H1 (cell line): ENCODE measurements at regions of chr1 and their contacts with region 1.

Region 1: DNA sequence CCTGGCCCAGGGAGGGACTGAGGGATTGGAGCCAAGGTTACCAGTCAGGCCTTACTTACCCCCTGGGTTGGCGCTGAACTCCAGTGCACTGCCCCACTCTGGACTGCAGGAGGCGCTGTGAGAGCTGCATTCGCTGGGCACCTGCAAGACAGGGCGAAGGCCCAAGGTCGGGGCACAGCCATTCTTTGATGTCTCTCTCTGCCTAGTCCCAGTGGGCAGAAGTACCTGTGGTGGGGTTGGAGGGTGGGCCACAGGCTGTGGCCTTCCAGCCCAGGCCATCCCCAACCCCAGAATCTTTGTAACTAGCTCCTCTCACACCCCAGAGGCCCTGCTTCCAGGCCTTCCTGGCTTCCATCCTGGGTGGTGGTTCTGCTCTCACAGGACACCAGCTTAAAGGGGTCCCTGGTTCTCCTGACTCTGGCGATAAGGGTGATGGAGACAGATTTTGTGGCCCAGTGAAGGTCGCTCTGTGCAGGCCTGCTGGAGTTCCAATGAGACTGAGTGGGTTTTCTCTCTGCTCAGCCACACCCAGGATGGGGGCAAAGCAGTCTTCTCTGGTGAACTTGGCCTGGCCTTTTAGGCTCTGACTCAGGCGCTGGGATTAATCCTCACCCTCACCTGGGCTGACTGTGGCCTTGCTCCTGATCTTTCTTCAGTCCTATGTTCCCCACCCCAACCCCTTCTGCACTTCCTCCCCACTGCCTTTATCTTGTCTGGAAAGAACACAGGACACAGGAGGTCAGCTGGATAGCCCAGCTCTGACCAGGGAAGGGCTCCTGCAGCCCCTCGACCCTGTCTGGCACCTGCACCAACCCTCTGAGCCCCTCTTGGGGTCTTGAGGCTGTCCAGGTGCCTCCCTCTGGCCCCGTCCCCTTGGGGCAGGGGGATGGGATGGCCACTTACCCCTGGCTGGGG is 967 bp downstream of the MYOG start:
- DNase-seq: peak; percentile 47 to 92
- H3K4me3 ChIP-seq: no peak overlapping the region
- H3K27ac ChIP-seq: no peak overlapping the region
- H3K4me1 ChIP-seq: peaks cover 9 to 14% (median 11%) of the 10 kb centered on the region in 4 experiments
- H3K27me3 ChIP-seq: 0 out of 7 replicates have a peak, but pooled peaks cover 0 to 2% (median 0%) of the 10 kb centered on the region in 4 experiments
- CTCF ChIP-seq: peak; percentile 90 to 96 (median 96)
- EP300 ChIP-seq: no peak
- POLR2A ChIP-seq: no peak
- RAD21 ChIP-seq: peak; percentile 68 to 77

Region 2: GRCh38 chr1:202788800-202789199 is 296.0 kb before region 1 on chr1:
- CTCF ChIA-PET with region 1: no interaction called
- POLR2A ChIA-PET with region 1: no interaction called
- DNase-seq: no peak
- H3K4me3 ChIP-seq: no peak overlapping the region
- H3K27ac ChIP-seq: no peak overlapping the region
- H3K4me1 ChIP-seq: no peaks in the 10 kb centered on the region
- H3K27me3 ChIP-seq: no peaks in the 10 kb centered on the region
- CTCF ChIP-seq: no peak
- EP300 ChIP-seq: no peak
- POLR2A ChIP-seq: no peak
- RAD21 ChIP-seq: no peak

Region 3: DNA sequence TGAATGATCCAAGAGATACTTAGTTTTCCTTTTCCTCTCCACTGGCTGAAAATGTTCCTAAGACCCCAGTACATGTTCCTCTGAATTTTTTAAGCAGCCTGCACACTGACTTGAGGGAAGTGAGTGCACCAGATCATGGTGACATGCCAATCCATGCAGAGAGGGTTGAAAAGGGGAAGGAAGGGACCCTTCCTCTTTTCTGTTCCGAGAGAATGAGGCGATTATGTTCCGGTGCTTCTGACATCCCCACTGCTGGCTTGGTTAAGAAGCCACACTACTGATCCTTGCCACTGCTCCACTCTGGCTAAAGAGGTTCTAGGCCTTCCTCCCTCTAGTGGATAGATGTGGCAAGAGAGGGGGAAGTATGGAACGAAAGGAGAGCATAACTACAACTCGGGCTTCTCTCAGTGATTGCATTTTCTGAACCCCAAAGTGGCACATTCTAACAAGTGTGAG is 116.0 kb before region 1 on chr1:
- CTCF ChIA-PET with region 1: no interaction called
- POLR2A ChIA-PET with region 1: no interaction called
- DNase-seq: peak in 1 of 2 experiments; percentile 49
- H3K4me3 ChIP-seq: no peak overlapping the region
- H3K27ac ChIP-seq: no peak overlapping the region
- H3K4me1 ChIP-seq: peaks cover 4 to 6% (median 5%) of the 10 kb centered on the region in 4 experiments; a peak in 6 of 7 replicates
- H3K27me3 ChIP-seq: no peaks in the 10 kb centered on the region; a peak in 2 of 7 replicates
- CTCF ChIP-seq: peak in 2 of 3 experiments; percentile 87 to 88; a peak in 3 of 4 replicates
- EP300 ChIP-seq: no peak
- POLR2A ChIP-seq: no peak
- RAD21 ChIP-seq: peak; percentile 47 to 52

Region 4: DNA sequence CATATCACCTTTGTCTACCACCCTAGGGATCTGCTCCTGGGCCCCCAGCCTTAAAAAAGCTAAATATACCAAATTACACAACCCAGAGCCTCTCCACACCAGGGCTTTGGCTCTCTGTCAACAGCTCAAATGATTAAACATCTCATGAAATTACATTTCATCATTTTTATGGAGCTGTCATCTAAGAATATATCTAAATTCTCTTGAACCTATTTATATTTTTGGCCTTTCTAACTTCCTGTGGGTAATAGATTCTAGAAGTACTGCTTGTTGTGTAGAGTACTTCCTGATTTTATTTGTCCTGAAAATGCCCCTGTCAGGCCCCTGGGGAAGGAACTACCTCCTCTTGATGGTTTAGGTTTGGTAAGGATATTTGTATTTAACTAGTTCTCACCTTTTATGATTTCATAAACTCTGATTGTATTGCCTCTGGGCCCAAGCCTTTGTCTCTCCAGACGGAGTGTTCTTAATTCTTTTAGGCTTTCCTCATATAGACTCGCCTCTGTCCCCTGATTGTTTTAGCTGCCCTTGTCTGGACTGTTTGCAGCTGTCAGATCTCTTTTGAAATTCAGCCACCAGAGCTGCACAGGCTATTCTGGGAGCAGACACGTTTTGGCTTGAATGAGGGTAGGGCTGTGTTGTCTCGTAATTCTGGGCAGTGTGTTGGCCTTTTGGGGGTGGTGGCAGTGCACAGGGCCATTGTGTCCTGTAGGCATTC is 15.7 kb before region 1 on chr1:
- CTCF ChIA-PET with region 1: interaction called, 143 read pairs
- POLR2A ChIA-PET with region 1: interaction called, 3 read pairs
- DNase-seq: no peak
- H3K4me3 ChIP-seq: no peak overlapping the region
- H3K27ac ChIP-seq: no peak overlapping the region
- H3K4me1 ChIP-seq: no peaks in the 10 kb centered on the region
- H3K27me3 ChIP-seq: peaks cover 0 to 2% (median 0%) of the 10 kb centered on the region in 4 experiments; a peak in 4 of 7 replicates
- CTCF ChIP-seq: no peak
- EP300 ChIP-seq: no peak
- POLR2A ChIP-seq: no peak
- RAD21 ChIP-seq: no peak

Region 5: DNA sequence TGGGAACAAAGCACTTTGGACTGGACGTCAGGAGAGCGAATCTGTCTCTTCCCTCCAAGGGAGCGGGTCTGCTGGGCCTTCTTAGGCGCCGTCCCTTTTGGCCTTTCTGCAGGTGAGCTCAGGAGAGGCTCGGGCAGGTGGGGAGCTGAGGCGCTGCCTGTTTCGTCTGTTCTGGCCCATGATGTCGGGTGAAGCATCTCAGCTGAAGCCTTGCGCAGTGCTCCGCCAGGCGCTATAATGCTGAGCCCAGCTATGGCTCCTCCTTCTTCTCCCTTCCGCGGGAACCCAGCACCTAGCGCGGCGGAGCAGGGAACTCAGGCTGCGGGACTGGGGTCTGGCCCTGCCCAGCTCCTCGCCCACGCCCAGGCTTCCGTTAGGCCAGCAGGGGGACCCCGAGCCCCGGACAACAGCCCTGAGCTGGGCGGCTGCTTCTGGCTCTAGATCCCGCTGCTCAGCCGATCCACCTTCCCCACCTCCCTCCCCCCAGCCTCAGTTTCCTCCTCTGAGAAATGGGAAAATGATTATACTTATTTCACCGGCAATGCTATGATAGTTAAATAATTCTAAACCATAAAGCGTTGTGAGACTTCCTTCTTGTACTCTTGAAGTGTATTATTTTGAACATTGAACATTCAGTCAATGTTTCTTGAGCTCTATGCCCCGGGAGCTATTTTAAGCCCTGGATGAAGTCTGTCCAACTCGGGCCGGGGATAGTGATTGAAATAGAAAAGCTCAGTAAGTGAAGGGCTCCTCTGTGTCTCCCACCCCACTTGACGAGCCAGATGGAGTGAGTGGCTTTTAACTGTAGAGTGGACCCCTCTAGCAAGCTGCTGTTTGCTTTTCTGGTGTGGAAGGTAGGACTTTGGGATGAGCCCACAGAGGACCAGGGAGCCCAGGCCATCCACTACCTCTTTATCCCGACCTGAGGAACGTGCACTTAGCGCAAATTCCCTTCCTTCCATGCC is 33.0 kb after region 1 on chr1:
- CTCF ChIA-PET with region 1: interaction called, 275 read pairs
- POLR2A ChIA-PET with region 1: interaction called, 4 read pairs
- DNase-seq: peak; percentile 76 to 93
- H3K4me3 ChIP-seq: peak overlapping the region in 3 of 4 experiments; percentile 25 to 43 (median 32); a peak in 4 of 8 replicates
- H3K27ac ChIP-seq: no peak overlapping the region
- H3K4me1 ChIP-seq: peaks cover 0 to 2% (median under 1%) of the 10 kb centered on the region in 4 experiments; a peak in 1 of 7 replicates
- H3K27me3 ChIP-seq: peaks cover 0 to 6% (median 3%) of the 10 kb centered on the region in 4 experiments; a peak in 4 of 7 replicates
- CTCF ChIP-seq: peak; percentile 83 to 97 (median 92)
- EP300 ChIP-seq: peak in 1 of 2 experiments; percentile 29; a peak in 1 of 3 replicates
- POLR2A ChIP-seq: no peak
- RAD21 ChIP-seq: peak; percentile 98

Region 6: GRCh38 chr1:203140743-203141520 is 56.1 kb after region 1 on chr1:
- CTCF ChIA-PET with region 1: interaction called, 10 read pairs
- POLR2A ChIA-PET with region 1: no interaction called
- DNase-seq: no peak
- H3K4me3 ChIP-seq: no peak overlapping the region
- H3K27ac ChIP-seq: no peak overlapping the region; the same call in 1 of the 2 replicates
- H3K4me1 ChIP-seq: peaks cover 0 to 7% (median under 1%) of the 10 kb centered on the region in 4 experiments; a peak in 2 of 7 replicates
- H3K27me3 ChIP-seq: no peaks in the 10 kb centered on the region
- CTCF ChIP-seq: no peak
- EP300 ChIP-seq: no peak
- POLR2A ChIP-seq: no peak
- RAD21 ChIP-seq: no peak

Region 7: DNA sequence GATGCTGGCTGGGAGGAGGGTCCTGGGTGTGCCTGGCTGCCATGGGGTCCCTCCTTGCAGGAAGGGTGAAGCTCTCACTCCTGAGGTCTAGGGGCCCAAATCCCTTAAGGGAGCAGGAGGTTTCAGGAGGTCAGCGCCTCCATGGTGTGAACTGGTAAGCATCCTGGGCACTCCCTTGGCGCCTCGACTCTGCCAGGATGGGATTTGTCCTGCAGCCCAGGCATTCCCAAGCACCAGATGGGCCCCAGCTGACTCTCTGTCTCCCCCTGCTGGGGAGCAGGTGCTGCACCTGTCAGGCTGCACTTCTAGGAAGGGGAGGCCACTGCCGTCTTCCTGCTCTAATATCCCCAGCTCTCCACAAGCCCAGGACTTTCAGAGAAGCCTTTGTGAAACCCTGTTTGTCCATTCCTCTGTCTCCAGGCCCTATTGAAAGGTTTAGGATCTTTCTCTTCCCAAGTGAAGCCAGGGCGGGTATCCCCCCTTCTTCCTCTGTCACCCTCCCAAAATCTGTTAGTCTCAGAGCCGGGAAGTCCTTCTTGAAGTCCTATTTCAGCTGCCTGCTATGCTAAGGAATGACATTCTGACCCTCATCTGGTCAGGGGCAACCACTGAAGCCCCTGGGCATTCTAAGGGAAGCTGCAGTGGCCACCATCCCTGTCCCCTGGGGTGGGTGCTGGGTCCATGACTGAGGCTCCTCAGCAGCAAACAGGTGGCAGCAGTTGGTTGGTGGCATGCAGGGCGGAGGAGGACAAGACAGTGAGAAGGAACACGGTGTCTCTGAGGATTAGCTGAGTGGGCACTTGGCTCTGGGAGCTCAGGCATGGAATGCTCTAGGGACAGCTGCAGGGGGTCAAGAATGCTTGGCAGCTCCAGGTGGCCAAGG is 87.5 kb after region 1 on chr1:
- CTCF ChIA-PET with region 1: interaction called, 52 read pairs
- POLR2A ChIA-PET with region 1: no interaction called
- DNase-seq: peak; percentile 68 to 92
- H3K4me3 ChIP-seq: no peak overlapping the region
- H3K27ac ChIP-seq: no peak overlapping the region
- H3K4me1 ChIP-seq: peaks cover 0 to 7% (median under 1%) of the 10 kb centered on the region in 4 experiments; a peak in 3 of 7 replicates
- H3K27me3 ChIP-seq: no peaks in the 10 kb centered on the region
- CTCF ChIP-seq: peak; percentile 97 to 99 (median 97)
- EP300 ChIP-seq: no peak
- POLR2A ChIP-seq: no peak
- RAD21 ChIP-seq: peak; percentile 82 to 90